ENCODE measurements at regions of chr11 and their contacts with region 1.

Region 1: GRCh38 chr11:61733120-61733978 is 19.1 kb upstream of the MYRF start:
- DNase-seq: peak; percentile 92
- ATAC-seq: peak; percentile 81 to 84

Region 2: GRCh38 chr11:61507962-61508824 is 225.2 kb before region 1 on chr11 and contains the start of gene LRRC10B:
- intact Hi-C with region 1: no loop called
- DNase-seq: no peak
- ATAC-seq: no peak
- total RNA-seq, gene LRRC10B: 0.74 to 1.1 TPM

Region 3: DNA sequence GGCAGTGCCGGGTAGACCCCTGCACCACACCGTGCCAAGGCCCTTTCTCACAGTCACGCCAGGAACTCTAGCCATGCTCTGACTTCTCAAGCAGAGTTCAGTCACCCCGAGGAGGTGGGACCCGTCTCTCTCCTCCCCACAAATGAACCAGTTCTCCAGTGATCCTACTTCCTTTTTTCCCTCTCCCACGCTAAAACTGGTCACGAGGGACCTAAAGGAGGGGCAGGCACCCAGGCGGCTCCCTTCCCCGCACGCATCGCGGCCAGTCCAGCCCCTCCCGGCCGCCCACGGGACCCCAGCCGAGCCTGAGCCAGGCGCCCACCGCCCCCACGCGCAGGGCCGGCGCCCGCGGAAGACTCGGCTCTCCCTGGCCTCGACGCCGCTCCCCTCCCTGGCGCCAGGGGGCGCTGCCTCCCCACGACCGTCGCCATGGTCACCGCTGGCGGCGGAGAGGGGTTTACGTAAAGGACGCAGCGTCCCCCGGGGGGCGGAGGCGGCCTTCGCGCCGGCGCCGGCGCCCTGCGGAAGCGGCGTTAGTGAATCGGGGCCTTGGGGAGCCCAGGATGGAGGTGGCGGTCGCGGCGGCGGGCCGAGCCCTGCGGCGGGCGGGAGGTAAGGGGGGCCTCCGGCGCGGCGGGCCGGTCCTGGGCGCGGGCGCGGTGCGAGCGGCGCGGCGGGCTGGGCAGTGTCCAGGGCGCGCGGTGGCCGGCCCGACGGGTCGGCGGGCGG is 53.3 kb before region 1 on chr11 and contains the start of gene DAGLA:
- intact Hi-C with region 1: loop called (anchors 2 kb)
- DNase-seq: peak; percentile 73
- ATAC-seq: peak; percentile 80 to 87
- total RNA-seq, gene DAGLA: 4.1 to 5.0 TPM

Region 4: DNA sequence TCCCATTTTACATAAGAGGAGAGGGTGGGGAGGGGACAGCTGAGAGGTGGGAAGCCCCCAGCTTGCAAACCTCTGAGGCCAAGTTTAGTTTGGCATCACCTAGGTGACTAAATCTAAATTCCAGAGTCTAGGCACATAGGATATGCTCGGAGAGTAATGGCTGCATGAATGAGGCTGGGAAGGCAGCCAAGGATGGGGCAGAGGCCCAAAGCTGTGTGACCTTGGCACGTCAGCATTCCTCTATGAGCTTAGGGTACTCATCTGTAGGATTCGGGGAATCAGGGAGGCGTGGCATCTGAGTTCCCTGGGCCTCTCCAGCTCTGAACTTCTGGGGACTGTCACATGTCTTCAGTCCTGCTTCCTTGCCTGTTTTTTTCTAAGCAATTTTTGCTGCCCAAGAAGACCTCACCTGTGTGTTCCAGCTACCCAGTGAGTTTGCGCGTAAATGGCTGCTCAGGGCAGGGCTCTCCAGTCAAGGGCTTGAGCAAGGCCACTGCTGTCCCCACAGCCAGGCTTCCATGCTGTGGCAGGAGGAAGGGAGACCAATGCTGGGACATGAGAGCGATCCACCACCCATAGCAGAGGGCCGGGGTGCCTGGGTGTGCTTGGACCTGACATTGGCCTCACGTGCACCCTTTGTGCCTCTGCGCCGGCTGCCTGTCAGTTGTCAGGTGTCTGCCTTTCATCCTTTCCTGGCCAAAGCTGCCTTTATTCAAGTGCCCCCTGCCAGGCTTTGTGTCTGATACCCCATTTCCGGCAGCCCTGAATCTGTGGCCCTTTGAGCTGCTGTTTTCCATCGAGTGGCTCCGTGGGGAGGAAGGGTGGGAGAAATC is 39.2 kb before region 1 on chr11:
- intact Hi-C with region 1: no loop called
- DNase-seq: no peak
- ATAC-seq: no peak

Measured in left cardiac atrium (tissue), 4 donors.